Panc1 (cell line): ENCODE measurements at regions of chr5 and their contacts with region 1.

Region 1: GRCh38 chr5:44807269-44807668 is 1.5 kb upstream of the MRPS30 start:
- DNase-seq: no peak
- ATAC-seq: no peak
- H3K4me3 ChIP-seq: no peak overlapping the region
- H3K27ac ChIP-seq: peak overlapping the region; percentile 51; the same call in 1 of the 2 replicates
- H3K4me1 ChIP-seq: peaks cover 14% of the 10 kb centered on the region; the same call in 1 of the 2 replicates
- H3K27me3 ChIP-seq: no peaks in the 10 kb centered on the region
- CTCF ChIP-seq: no peak

Region 2: DNA sequence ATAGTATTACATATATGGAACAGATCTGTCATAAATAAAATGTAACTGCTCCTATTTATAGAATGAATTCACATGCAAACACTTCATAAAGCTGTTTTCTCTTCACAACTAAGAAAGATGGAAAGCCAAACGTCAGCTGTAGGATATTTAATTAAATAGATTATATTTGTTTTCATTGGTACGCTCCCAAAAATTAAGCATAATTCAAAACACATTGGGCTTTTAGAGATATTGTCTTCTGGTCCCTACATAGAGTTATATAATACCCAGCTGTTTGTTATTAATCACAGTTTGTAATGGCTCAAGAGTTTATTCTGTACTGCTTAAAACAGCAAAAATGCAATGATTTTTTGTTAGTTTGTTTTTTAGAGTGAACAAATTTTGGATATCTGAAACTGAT is 62.7 kb after region 1 on chr5:
- CTCF ChIA-PET with region 1: interaction called, 11 read pairs
- POLR2A ChIA-PET with region 1: no interaction called
- in situ Hi-C with region 1: no loop called
- intact Hi-C with region 1: no loop called
- DNase-seq: no peak
- ATAC-seq: no peak
- H3K4me3 ChIP-seq: no peak overlapping the region
- H3K27ac ChIP-seq: no peak overlapping the region
- H3K4me1 ChIP-seq: no peaks in the 10 kb centered on the region
- H3K27me3 ChIP-seq: no peaks in the 10 kb centered on the region
- CTCF ChIP-seq: no peak